ENCODE measurements at regions of chr2 and their contacts with region 1.

Region 1: GRCh38 chr2:9675415-9676351 is 44.9 kb upstream of the YWHAQ start:
- DNase-seq: no peak
- ATAC-seq: peak; percentile 86
- H3K4me3 ChIP-seq: peak overlapping the region; percentile 12 to 42; a peak in 3 of 4 replicates
- H3K27ac ChIP-seq: peak overlapping the region; percentile 60
- H3K4me1 ChIP-seq: peaks cover 21% of the 10 kb centered on the region
- H3K27me3 ChIP-seq: no peaks in the 10 kb centered on the region
- CTCF ChIP-seq: no peak

Region 2: GRCh38 chr2:9474361-9474967 is 201.2 kb before region 1 on chr2 and contains the start of gene IAH1:
- CTCF ChIA-PET with region 1: no interaction called
- POLR2A ChIA-PET with region 1: no interaction called
- in situ Hi-C with region 1: no loop called
- intact Hi-C with region 1: no loop called
- DNase-seq: no peak
- ATAC-seq: peak; percentile 89
- H3K4me3 ChIP-seq: peak within 1 kb of the TSS; percentile 69 to 96
- H3K27ac ChIP-seq: peak within 1 kb of the TSS; percentile 98
- H3K4me1 ChIP-seq: peaks cover 17% of the 10 kb centered on the region
- H3K27me3 ChIP-seq: no peaks in the 10 kb centered on the region
- CTCF ChIP-seq: no peak
- total RNA-seq, gene IAH1: 72.2 TPM

Region 3: GRCh38 chr2:9693211-9693520 is 17.5 kb after region 1 on chr2:
- CTCF ChIA-PET with region 1: interaction called, 15 read pairs
- POLR2A ChIA-PET with region 1: no interaction called
- in situ Hi-C with region 1: no loop called
- intact Hi-C with region 1: no loop called
- DNase-seq: no peak
- ATAC-seq: no peak; the same call in 1 of the 2 replicates
- H3K4me3 ChIP-seq: no peak overlapping the region
- H3K27ac ChIP-seq: no peak overlapping the region
- H3K4me1 ChIP-seq: no peaks in the 10 kb centered on the region
- H3K27me3 ChIP-seq: no peaks in the 10 kb centered on the region
- CTCF ChIP-seq: no peak

Region 4: GRCh38 chr2:10382354-10383061 is 706.8 kb after region 1 on chr2:
- CTCF ChIA-PET with region 1: no interaction called
- POLR2A ChIA-PET with region 1: no interaction called
- in situ Hi-C with region 1: no loop called
- intact Hi-C with region 1: no loop called
- DNase-seq: no peak
- ATAC-seq: peak; percentile 35
- H3K4me3 ChIP-seq: no peak overlapping the region
- H3K27ac ChIP-seq: peak overlapping the region; percentile 80
- H3K4me1 ChIP-seq: peaks cover 99% of the 10 kb centered on the region
- H3K27me3 ChIP-seq: no peaks in the 10 kb centered on the region
- CTCF ChIP-seq: no peak

Measured in Panc1 (cell line).